Aorta (tissue), 5 donors: ENCODE measurements at regions of chr12 and their contacts with region 1.

Region 1: GRCh38 chr12:2163172-2163941 is 110.6 kb downstream of the CACNA1C start:
- DNase-seq: peak; percentile 93 to 95
- ATAC-seq: peak; percentile 92
- H3K4me3 ChIP-seq: no peak overlapping the region
- H3K27ac ChIP-seq: peak overlapping the region; percentile 92 to 95
- H3K4me1 ChIP-seq: peaks cover 13 to 22% of the 10 kb centered on the region in 2 donors
- H3K27me3 ChIP-seq: no peaks in the 10 kb centered on the region

Region 2: GRCh38 chr12:2057041-2057794 is 106.1 kb before region 1 on chr12:
- intact Hi-C with region 1: loop called (anchors 5 kb)
- DNase-seq: peak; percentile 73 to 88
- ATAC-seq: peak; percentile 37
- H3K4me3 ChIP-seq: no peak overlapping the region
- H3K27ac ChIP-seq: peak overlapping the region; percentile 3 to 15
- H3K4me1 ChIP-seq: no peaks in the 10 kb centered on the region
- H3K27me3 ChIP-seq: no peaks in the 10 kb centered on the region

Region 3: DNA sequence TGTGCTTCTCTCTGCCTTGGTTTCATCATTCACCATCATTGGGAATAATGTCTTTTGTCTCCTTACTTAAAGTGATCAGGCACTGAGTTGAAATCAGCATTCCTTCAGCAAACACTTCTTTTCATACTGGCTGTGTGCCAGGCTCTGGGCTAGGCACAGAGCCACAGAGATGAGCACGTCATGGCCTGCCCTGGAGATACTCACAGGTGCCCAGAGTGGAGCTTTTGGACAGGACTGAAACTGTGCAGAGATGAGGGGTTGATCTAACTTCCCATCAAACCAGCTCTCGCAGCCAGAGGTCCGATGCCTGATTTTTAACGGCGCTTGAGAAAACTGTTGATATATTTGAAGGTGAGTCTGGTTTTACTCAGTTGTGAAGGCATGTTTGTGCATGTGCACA is 67.5 kb before region 1 on chr12:
- intact Hi-C with region 1: loop called in 1 of 2 experiments (anchors 5 kb)
- DNase-seq: no peak
- ATAC-seq: no peak
- H3K4me3 ChIP-seq: no peak overlapping the region
- H3K27ac ChIP-seq: peak overlapping the region in 1 of 2 donors; percentile 71
- H3K4me1 ChIP-seq: peaks cover 0 to 2% of the 10 kb centered on the region in 2 donors
- H3K27me3 ChIP-seq: no peaks in the 10 kb centered on the region

Region 4: DNA sequence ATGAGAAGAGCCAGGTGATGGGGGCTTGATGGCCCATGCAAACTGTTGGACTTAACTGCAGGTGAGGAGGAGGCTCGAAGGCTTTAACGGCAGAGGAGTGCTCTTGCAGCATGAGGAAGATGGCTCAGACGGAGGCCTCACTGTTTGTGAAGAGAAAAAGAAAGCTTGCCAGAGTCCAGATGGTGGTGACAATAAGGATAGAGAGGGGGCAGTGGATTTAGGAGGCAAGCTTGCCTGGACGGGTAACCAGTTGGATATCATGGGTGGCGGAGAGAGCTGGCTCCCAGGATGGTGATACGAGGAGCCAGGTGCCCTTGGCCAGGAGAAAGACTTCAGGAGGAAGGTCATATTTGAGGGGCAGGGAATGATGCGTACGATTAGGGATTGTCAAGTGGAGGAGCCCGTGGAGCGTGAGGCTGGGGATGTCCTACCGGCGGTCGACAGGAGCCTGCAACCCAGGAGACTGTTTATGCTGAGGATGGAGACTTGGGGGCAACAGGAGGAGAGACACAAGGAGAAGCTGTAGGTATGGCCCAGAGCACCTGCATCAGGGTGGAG is 38.8 kb before region 1 on chr12:
- intact Hi-C with region 1: loop called in 1 of 2 experiments (anchors 5 kb)
- DNase-seq: peak in 1 of 2 donors; percentile 50
- ATAC-seq: no peak
- H3K4me3 ChIP-seq: no peak overlapping the region
- H3K27ac ChIP-seq: no peak overlapping the region
- H3K4me1 ChIP-seq: peaks cover 0 to 1% of the 10 kb centered on the region in 2 donors
- H3K27me3 ChIP-seq: no peaks in the 10 kb centered on the region

Region 5: DNA sequence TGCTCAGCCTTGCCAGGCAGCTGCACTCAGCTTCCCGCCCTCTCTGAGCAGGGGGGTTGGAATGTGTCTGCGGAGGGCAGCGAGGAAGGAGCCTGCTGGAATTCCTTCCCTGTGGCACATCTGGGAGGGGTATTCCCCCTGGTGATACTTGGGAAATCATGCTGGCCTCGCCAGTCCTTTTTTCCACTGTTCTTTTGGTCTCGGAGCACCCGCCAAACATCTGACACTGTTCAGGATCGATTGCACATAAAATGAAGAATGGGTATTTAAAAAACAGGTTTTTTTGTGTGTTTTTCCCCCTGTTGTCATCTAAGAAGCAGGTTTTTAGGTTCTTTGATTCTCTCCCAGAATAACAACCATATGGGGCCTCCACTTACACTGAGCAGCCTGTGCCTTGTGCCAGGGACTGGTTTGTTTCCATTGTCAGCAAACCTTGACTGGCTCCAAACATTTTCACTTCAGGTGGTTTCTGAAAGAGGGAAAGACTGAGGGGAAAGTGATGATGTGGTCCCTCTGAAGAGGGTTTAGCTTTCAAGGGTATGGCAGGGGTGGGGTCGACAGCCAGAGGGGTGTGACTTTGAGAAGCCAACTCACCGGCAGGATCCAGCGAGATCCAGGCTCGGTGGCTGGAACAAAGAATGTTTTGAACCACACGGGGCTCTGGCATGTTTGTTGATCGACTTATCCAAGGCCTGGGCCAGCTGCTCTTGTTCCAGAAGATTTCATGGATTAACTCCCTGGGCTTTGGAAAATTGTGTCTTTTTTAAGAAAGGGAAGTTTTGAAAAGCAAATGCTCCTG is 104.5 kb after region 1 on chr12:
- intact Hi-C with region 1: loop called in 1 of 2 experiments (anchors 5 kb)
- DNase-seq: peak; percentile 79 to 91
- ATAC-seq: peak; percentile 67
- H3K4me3 ChIP-seq: no peak overlapping the region
- H3K27ac ChIP-seq: peak overlapping the region; percentile 58 to 98
- H3K4me1 ChIP-seq: peaks cover 8 to 10% of the 10 kb centered on the region in 2 donors
- H3K27me3 ChIP-seq: no peaks in the 10 kb centered on the region

Region 6: DNA sequence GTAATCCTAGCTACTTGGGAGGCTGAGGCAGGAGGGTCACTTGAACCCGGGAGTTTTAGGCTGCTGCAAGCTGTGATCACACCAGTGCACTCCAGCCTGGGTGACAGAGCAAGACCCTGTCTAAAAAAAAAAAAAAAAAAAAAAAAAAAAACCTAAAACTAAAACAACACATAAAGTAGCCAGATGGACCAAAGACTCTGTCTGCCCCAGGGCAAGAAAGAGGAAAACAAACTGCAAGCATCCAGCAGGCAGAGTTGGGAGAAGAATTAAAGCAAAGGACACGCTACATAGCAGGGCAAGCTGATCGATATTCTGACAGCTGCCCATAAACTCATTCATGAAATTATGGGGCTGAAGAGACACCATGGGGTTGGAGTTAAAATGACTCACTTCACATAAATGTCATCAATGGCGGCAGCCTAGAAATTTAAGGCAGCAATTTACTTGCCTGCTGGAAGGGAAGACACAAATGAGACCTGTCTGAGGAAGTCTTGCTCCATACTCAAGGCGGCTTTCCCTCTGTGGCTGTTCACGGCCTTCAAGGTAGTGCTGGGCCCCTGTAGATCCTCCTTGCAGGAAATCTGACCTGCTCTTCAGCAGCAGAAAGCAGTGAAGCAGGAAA is 372.3 kb after region 1 on chr12:
- intact Hi-C with region 1: no loop called
- DNase-seq: no peak
- ATAC-seq: no peak
- H3K4me3 ChIP-seq: no peak overlapping the region
- H3K27ac ChIP-seq: no peak overlapping the region
- H3K4me1 ChIP-seq: no peaks in the 10 kb centered on the region
- H3K27me3 ChIP-seq: no peaks in the 10 kb centered on the region